Caco-2 (cell line): ENCODE measurements at regions of chr2 and their contacts with region 1.

Region 1: GRCh38 chr2:53028259-53028658 is 739.3 kb upstream of the CHAC2 start:
- DNase-seq: peak in 1 of 2 experiments; percentile 32
- H3K4me3 ChIP-seq: no peak overlapping the region
- H3K4me3 Mint-ChIP-seq: no peak overlapping the region
- H3K27ac Mint-ChIP-seq: peak overlapping the region; percentile 22
- H3K4me1 ChIP-seq: peaks cover 13% of the 10 kb centered on the region
- H3K4me1 Mint-ChIP-seq: peaks cover 15% of the 10 kb centered on the region
- H3K27me3 ChIP-seq: no peaks in the 10 kb centered on the region
- H3K27me3 Mint-ChIP-seq: no peaks in the 10 kb centered on the region
- CTCF ChIP-seq: no peak

Region 2: DNA sequence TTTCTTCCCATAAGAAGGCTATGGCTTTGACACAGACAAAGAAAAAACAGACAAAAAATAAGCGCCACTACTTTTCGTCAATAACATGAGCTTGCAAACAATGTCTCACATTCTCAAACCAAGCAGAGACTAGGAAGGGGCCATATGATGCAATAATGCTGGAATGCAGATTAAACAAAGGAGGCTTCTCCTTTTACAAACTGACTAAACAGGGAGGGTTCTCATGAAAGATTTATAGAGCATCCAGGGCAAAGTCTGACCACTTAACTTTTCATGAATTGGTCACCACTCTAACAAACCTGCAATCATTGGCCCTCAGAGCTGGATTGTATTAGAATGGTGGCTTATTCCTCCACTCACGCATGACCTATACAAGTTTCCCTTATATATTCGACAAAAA is 76.0 kb after region 1 on chr2:
- CTCF ChIA-PET with region 1: no interaction called
- POLR2A ChIA-PET with region 1: no interaction called
- intact Hi-C with region 1: loop called (anchors 2 kb)
- DNase-seq: peak; percentile 39 to 60
- H3K4me3 ChIP-seq: no peak overlapping the region
- H3K4me3 Mint-ChIP-seq: no peak overlapping the region
- H3K27ac Mint-ChIP-seq: peak overlapping the region; percentile 77
- H3K4me1 ChIP-seq: peaks cover 25% of the 10 kb centered on the region
- H3K4me1 Mint-ChIP-seq: peaks cover 17% of the 10 kb centered on the region
- H3K27me3 ChIP-seq: no peaks in the 10 kb centered on the region
- H3K27me3 Mint-ChIP-seq: no peaks in the 10 kb centered on the region
- CTCF ChIP-seq: no peak